HEK293 (cell line): ENCODE measurements at regions of chr10 and their contacts with region 1.

Region 1: GRCh38 chr10:70925377-70926225 is 37.2 kb upstream of the PCBD1 start:
- H3K4me3 ChIP-seq: no peak overlapping the region
- H3K27ac ChIP-seq: no peak overlapping the region
- H3K4me1 ChIP-seq: peaks cover 8% of the 10 kb centered on the region; the same call in 1 of the 2 replicates
- CTCF ChIP-seq: peak; percentile 89

Region 2: DNA sequence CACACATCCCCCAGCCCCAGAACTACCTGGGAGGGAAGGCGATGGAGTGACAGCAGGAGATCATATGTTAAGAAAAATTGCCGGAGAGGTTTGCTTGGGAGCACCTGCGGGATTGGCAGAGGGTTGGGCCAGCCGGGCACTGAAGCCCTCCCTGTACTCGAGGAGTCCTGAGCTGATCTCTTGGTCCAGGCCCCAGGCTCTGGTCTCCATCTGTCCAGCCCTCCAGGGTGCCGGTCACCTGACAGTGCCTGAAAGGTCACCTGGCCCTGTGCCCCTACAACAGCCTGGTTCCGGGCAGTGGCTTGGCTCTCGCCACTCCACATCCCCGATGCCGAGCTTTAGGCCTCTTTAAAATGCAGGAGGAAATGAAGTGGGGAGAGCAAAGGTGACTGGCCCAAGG is 10.0 kb after region 1 on chr10:
- CTCF ChIA-PET with region 1: interaction called, 27 read pairs
- POLR2A ChIA-PET with region 1: no interaction called
- H3K4me3 ChIP-seq: no peak overlapping the region
- H3K27ac ChIP-seq: no peak overlapping the region
- H3K4me1 ChIP-seq: peaks cover 4% of the 10 kb centered on the region; the same call in 1 of the 2 replicates
- CTCF ChIP-seq: no peak

Region 3: DNA sequence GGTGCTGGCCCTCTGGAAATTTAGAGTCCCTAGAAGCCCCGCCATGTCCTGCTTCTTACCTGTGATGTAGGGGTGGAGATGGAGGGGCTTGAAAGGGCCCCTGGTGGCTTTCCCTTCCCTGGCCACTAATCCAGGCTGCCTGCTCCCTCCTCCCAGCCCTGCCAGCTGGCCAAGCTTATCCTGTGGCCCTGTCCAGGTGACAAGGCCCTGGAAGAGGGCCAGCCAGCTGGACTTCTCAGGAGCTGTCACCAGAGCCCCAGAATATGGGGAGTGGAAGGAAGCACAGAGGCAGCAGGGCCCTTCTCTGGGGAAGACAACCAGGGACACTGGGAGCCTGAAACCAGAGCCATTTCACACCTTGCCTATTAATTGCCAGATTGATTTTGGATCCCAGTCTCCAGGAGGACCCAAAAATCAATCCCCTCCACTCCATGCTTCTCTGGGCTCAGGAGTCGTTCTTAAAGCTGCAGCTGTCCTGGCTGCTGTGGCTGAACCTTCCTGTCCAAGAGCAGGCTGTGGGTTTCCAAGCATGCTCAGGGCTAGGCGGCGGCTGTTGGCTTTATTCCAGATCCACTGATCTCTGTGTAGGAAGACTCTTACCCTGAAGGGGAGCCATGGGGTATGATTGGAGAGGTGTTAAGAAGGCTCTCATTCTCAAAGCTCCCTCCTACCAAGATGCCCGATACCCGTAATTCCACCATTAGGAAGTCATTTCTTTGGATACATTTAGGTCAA is 15.4 kb after region 1 on chr10:
- CTCF ChIA-PET with region 1: interaction called, 27 read pairs
- POLR2A ChIA-PET with region 1: interaction called, 3 read pairs
- H3K4me3 ChIP-seq: no peak overlapping the region
- H3K27ac ChIP-seq: no peak overlapping the region
- H3K4me1 ChIP-seq: no peaks in the 10 kb centered on the region
- CTCF ChIP-seq: no peak

Region 4: GRCh38 chr10:71209352-71209715 is 283.7 kb after region 1 on chr10:
- CTCF ChIA-PET with region 1: interaction called, 33 read pairs
- POLR2A ChIA-PET with region 1: no interaction called
- H3K4me3 ChIP-seq: no peak overlapping the region
- H3K27ac ChIP-seq: no peak overlapping the region
- H3K4me1 ChIP-seq: peaks cover 13% of the 10 kb centered on the region
- CTCF ChIP-seq: no peak

Region 5: DNA sequence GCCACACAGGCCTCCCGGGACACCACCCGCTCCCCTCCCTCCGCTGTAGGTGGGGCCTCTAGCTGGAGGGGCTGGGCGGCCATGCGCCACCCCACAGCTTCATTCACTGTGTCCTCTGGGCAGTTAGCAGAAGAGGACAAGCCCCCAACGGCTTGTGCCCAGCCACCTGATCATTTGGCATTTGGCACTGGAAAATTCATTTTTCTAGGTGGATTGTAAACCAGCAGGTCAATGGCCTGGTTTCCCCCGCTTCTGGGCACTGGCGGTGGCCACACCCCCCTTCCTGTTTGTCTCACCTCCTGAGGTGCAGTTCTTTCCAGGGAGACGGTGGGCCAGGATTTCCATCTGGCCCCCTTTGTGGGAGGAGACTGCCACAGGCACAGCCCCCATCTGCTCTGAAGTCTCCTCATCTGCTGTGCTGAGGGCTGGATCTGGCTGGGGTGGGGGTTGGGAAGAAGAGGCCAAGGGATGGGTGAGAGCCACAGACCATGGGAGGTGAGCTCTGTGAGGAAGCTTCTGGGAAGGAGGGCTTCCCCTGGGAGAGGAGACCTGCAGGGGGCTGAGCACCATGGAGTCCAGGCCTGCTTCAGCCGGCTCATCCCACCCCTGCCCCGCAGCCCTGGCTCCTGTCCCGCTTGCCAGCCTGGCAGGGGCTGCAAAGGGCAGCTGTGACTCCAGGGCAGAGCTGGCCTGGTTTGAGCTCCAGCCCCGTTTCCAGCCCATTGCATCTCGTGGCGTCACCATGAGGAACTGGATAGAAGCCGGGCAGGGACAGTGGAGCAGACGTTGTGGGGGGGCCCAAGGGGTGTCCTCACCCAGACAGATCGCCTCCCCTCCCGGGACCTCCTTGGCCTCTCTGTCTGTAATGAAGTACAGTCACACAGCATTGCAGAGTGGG is 353.3 kb after region 1 on chr10:
- CTCF ChIA-PET with region 1: interaction called, 48 read pairs
- POLR2A ChIA-PET with region 1: no interaction called
- H3K4me3 ChIP-seq: no peak overlapping the region
- H3K27ac ChIP-seq: no peak overlapping the region
- H3K4me1 ChIP-seq: no peaks in the 10 kb centered on the region
- CTCF ChIP-seq: no peak

Region 6: GRCh38 chr10:71285180-71285545 is 359.6 kb after region 1 on chr10:
- CTCF ChIA-PET with region 1: interaction called, 48 read pairs
- POLR2A ChIA-PET with region 1: no interaction called
- H3K4me3 ChIP-seq: no peak overlapping the region
- H3K27ac ChIP-seq: no peak overlapping the region
- H3K4me1 ChIP-seq: no peaks in the 10 kb centered on the region
- CTCF ChIP-seq: peak; percentile 68; the same call in 1 of the 2 replicates